AG04450 (cell line): ENCODE measurements at regions of chr16 and their contacts with region 1.

Region 1: DNA sequence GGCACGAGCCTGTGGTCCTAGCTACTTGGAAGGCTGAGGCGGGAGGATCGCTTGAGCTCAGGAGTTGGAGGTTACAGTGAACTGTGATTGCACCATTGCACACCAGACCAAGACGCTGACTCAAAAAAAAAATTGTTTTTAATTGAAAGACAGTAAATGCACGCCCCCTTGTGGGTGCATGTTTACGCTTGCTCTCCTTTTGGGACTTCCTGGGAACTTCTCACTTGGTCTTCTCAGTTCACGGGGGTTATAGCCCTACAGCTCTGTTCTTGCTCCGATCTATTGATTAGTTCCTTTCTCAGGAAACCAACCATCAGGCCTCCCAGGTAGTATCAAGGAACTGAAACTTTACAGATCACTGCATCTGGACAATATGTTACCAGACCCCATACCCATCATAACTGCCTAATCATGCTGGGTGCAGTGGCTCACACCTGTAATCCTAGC is 14.2 kb upstream of the RIPOR1 start:
- DNase-seq: peak; percentile 65
- H3K4me3 ChIP-seq: no peak overlapping the region
- H3K27ac ChIP-seq: no peak overlapping the region
- H3K27me3 ChIP-seq: no peaks in the 10 kb centered on the region
- CTCF ChIP-seq: peak; percentile 75

Region 2: DNA sequence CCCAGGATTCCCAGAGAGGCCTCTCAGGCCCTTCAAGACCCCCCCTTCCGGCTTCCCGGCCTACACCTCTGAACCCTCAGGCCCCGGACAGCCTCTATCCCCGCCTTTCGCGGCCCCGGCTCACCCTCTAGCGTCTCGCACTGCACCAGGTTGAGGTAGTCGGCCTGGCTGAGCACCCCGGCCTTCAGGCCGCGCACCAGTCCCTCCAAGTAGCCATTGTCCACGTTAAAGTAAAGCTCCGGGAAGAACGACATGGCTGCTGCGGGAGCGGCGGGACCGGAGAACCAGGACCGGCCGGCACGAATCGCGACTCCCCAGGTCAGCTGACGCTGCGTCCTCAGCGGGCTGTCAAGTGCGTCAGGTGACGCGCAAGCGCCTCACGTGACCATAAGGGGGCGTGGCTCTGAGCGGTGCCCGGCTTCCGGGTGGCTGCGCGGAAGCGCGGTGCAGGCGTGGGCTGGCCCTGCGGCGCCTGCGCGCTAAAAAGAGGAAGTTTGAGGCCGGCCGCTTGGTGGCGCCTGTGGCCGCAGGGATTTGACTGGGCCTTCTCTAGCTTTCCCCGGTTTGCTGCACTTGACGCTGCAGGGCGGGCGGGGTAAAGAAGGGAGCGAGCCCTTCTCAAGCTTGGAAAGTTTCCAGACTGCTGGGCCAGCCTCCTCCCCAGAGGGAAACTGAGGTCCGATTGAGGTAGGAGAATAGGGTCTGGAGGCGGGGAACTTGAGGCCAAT is 33.4 kb before region 1 on chr16 and contains the start of gene ATP6V0D1:
- CTCF ChIA-PET with region 1: interaction called, 54 read pairs
- POLR2A ChIA-PET with region 1: interaction called, 3 read pairs
- DNase-seq: peak; percentile 96
- H3K4me3 ChIP-seq: peak within 1 kb of the TSS; percentile 96
- H3K27ac ChIP-seq: peak within 1 kb of the TSS; percentile 92
- H3K27me3 ChIP-seq: no peaks in the 10 kb centered on the region
- CTCF ChIP-seq: peak; percentile 89
- polyA plus RNA-seq, gene ATP6V0D1: 101 and 121 TPM in 2 replicates

Region 3: GRCh38 chr16:67499106-67499505 is 15.3 kb before region 1 on chr16:
- CTCF ChIA-PET with region 1: interaction called, 91 read pairs
- POLR2A ChIA-PET with region 1: no interaction called
- DNase-seq: no peak
- H3K4me3 ChIP-seq: no peak overlapping the region
- H3K27ac ChIP-seq: no peak overlapping the region
- H3K27me3 ChIP-seq: no peaks in the 10 kb centered on the region
- CTCF ChIP-seq: no peak

Region 4: DNA sequence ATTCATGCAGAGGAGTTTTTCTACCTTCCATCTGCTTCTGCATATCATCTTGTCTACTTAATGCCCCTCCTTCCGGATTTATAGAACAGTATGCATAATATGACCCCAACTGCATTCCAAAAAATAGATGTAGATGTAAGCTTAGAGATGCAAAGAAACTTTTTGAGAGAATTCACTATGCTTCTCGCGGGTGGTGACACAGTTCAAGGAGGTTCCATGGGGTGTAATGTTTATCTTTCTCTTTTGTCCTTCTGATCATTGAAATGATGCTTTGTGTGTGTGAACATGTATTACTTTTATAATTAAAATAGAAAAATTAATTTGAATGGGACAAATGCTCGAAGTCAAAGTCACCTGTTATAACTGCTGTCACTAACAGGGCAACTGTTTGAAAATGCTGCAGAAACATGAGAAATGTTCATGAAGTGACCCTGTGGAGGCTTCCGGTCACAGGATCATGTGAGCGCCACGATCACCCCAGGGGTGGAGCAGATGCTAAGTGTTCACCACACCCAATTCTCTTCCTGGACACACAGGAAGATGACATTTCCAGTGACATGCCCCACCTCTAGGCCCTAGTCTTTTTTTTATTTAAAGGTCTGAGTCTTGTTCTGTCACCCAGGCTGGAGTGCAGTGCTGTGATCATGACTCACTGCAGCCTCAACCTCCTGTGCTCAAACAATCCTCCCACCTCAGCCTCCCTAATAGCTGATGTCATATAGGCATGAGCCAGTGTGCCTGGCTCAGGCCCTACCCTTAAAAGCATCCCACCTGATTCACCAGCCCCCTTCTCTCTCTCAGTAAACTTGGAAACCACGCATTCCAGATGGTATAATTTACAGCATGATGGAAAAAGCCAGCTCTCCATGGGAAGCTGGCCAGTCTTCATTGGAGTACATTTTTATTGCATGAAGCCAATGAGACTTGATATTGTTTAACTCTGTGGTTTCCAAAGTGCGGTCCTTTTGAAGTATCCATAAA is 10.1 kb before region 1 on chr16:
- CTCF ChIA-PET with region 1: interaction called, 91 read pairs
- POLR2A ChIA-PET with region 1: no interaction called
- DNase-seq: no peak
- H3K4me3 ChIP-seq: no peak overlapping the region
- H3K27ac ChIP-seq: no peak overlapping the region
- H3K27me3 ChIP-seq: no peaks in the 10 kb centered on the region
- CTCF ChIP-seq: no peak